MCF 10A (cell line): ENCODE measurements at regions of chr17 and their contacts with region 1.

Region 1: GRCh38 chr17:67376737-67377487 is at the start of gene PITPNC1:
- DNase-seq: peak; percentile 88
- H3K4me3 Mint-ChIP-seq: peak within 1 kb of the TSS; percentile 75
- H3K27ac Mint-ChIP-seq: no peak within 1 kb of the TSS
- H3K4me1 Mint-ChIP-seq: peaks cover 9% of the 10 kb centered on the region
- H3K27me3 Mint-ChIP-seq: no peaks in the 10 kb centered on the region
- CTCF ChIP-seq: no peak
- total RNA-seq, gene PITPNC1: 28.3 and 40.1 TPM in 2 replicates

Region 2: GRCh38 chr17:67212689-67213417 is 164.1 kb before region 1 on chr17:
- CTCF ChIA-PET with region 1: no interaction called
- POLR2A ChIA-PET with region 1: no interaction called
- intact Hi-C with region 1: no loop called
- DNase-seq: no peak
- H3K4me3 Mint-ChIP-seq: no peak overlapping the region
- H3K27ac Mint-ChIP-seq: peak overlapping the region; percentile 17
- H3K4me1 Mint-ChIP-seq: peaks cover 17% of the 10 kb centered on the region
- H3K27me3 Mint-ChIP-seq: no peaks in the 10 kb centered on the region
- CTCF ChIP-seq: no peak

Region 3: DNA sequence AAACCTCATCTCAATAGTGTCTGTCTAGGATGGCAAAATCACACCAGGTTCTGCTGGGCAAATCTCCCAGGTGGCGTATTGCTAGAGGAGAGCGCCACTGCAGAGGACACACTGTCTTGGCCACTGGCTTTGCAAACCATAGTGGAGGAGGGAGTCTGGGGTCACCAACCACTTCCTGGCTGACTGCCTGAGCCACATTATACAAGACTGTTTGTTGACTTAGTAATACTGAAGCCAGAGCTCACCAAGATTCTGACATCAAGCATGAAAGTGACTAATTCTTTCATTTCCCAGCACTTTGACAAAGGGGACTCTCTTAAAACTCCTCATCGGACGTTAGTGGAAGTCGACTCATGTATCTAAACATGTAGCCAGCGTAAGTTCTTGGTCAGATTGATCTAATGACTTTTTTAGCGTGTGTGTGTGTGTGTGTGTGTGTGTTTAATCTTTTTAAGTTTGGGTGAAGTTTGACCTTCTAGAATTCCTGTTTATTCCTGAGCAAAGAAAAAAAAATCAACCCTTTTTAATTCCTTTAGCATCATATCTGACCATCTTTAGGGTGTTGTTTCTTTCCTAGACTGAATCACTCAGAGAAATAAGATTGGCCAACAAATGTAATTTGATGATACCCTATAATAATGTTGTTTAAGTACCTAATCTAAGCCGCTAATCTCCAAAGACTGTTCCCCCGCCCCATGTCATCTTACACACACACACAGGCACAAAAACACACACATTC is 13.9 kb after region 1 on chr17:
- CTCF ChIA-PET with region 1: interaction called, 31 read pairs
- POLR2A ChIA-PET with region 1: interaction called, 3 read pairs
- intact Hi-C with region 1: no loop called
- DNase-seq: peak; percentile 92
- H3K4me3 Mint-ChIP-seq: peak overlapping the region; percentile 53
- H3K27ac Mint-ChIP-seq: peak overlapping the region; percentile 83
- H3K4me1 Mint-ChIP-seq: peaks cover 20% of the 10 kb centered on the region
- H3K27me3 Mint-ChIP-seq: no peaks in the 10 kb centered on the region
- CTCF ChIP-seq: no peak

Region 4: DNA sequence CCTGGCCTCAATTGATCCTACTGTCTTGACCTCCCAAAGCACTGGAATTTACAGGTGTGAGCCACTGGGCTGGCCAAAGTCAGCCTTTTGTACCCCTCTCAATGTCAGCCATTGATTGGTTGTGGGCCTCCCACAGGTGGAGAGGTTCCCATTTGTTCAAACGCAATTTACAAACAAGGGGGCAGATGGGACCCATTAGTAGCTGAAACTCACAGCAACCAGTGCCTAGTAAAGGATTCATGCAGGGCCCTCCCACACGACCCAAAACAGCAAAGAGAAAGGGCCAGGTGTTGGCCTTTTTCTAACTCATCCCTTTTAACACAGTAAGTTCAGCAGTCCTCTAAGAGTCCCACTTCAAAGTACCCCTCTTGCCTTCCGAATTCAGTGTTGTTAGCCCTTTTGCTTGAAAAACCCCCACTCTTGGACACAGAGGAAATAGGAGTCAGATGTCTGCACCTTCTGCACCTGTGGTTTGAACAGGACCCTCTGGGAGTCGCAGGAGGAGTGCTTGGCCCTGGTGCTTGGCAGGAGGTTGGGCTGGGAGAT is 89.4 kb after region 1 on chr17:
- CTCF ChIA-PET with region 1: interaction called, 91 read pairs
- POLR2A ChIA-PET with region 1: no interaction called
- intact Hi-C with region 1: no loop called
- DNase-seq: no peak
- H3K4me3 Mint-ChIP-seq: no peak overlapping the region
- H3K27ac Mint-ChIP-seq: no peak overlapping the region
- H3K4me1 Mint-ChIP-seq: no peaks in the 10 kb centered on the region
- H3K27me3 Mint-ChIP-seq: no peaks in the 10 kb centered on the region
- CTCF ChIP-seq: no peak

Region 5: GRCh38 chr17:67602956-67603355 is 226.0 kb after region 1 on chr17:
- CTCF ChIA-PET with region 1: interaction called, 7 read pairs
- POLR2A ChIA-PET with region 1: no interaction called
- intact Hi-C with region 1: loop called (anchors 2 kb)
- DNase-seq: peak; percentile 45
- H3K4me3 Mint-ChIP-seq: no peak overlapping the region
- H3K27ac Mint-ChIP-seq: no peak overlapping the region
- H3K4me1 Mint-ChIP-seq: peaks cover 6% of the 10 kb centered on the region
- H3K27me3 Mint-ChIP-seq: no peaks in the 10 kb centered on the region
- CTCF ChIP-seq: peak; percentile 30

Region 6: GRCh38 chr17:67689534-67690177 is 312.7 kb after region 1 on chr17:
- CTCF ChIA-PET with region 1: interaction called, 71 read pairs
- POLR2A ChIA-PET with region 1: interaction called, 5 read pairs
- intact Hi-C with region 1: loop called (anchors 1 kb)
- DNase-seq: peak; percentile 68
- H3K4me3 Mint-ChIP-seq: no peak overlapping the region
- H3K27ac Mint-ChIP-seq: no peak overlapping the region
- H3K4me1 Mint-ChIP-seq: no peaks in the 10 kb centered on the region
- H3K27me3 Mint-ChIP-seq: no peaks in the 10 kb centered on the region
- CTCF ChIP-seq: peak; percentile 69

Region 7: DNA sequence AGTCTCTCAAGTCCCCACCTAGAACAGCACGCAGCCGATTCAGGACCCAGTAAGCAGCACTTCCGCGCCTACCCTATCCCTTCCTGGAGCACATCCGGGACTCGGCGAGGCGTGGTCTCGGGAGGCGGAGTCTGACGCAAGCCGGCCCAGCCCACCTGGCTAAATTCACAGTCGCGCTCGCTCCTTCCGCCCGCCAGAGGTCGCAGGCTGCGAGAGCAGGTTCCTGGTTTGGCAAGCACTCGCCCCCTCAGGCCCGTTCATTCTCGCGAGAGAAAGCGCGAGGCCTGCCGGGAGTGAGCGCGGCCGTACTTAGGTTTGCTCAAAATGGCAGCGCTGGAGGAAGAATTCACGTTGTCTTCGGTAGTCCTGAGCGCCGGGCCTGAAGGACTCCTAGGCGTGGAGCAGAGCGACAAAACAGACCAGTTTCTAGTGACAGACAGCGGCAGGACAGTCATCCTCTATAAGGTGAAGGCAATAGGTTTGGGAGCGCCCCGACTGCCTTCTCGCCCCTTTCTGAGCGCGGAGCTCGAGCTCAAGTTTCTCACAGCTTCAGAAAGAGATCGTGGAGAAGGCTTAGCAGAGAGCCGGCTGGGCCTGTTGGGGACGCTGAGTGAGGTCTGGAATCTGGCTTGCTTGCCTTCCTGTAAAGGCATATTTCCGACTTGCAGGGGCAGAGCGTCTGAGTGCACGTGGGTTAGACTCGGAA is 340.9 kb after region 1 on chr17 and contains the start of gene NOL11:
- CTCF ChIA-PET with region 1: interaction called, 4 read pairs
- POLR2A ChIA-PET with region 1: interaction called, 9 read pairs
- intact Hi-C with region 1: loop called (anchors 10 kb)
- DNase-seq: peak; percentile 97
- H3K4me3 Mint-ChIP-seq: peak within 1 kb of the TSS; percentile 98
- H3K27ac Mint-ChIP-seq: peak within 1 kb of the TSS; percentile 100
- H3K4me1 Mint-ChIP-seq: no peaks in the 10 kb centered on the region
- H3K27me3 Mint-ChIP-seq: no peaks in the 10 kb centered on the region
- CTCF ChIP-seq: peak; percentile 74
- total RNA-seq, gene NOL11: 45.4 and 50.4 TPM in 2 replicates